Activated T-helper 2 cell treated with anti-CD3 and anti-CD28 coated beads, Interferon-gamma antibody, Interleukin-2, Interleukin-4, amounts not matched to agents 10 μg/mL and 5 μg/mL and 100 μg/mL, durations not matched to agents 14 hours and 24 hours and 36 hours (primary cell): ENCODE measurements at regions of chr14 and their contacts with region 1.

Region 1: DNA sequence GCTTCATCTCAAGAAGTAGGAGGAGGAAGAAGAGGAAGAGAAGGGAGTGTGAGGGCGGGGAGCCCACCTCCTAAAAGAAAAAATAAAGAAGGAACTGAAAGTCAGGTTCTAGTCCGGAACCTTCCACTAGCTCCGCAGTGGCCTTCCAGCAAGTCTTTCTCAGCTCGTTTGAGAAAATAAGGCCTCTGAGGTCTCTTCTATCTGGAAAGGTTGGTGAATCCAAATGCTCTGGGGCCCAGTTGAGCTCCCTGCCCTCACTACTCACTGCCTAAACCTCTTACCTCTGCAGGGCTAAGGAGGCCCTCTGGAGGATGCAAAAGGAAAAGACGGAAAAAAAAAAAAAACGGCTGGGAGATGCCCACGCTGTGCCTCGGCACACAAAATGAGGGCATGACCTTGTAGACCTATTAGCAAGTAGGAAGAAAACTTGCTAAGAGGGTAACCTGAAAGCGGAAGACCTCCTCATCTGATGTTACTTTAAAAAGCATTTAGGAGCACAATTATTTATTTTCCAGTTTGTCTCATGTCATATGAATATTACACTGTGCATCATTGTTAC is 35.9 kb downstream of the FBLN5 start:
- DNase-seq: peak; percentile 31
- H3K4me3 Mint-ChIP-seq: no peak overlapping the region
- H3K27ac Mint-ChIP-seq: peak overlapping the region; percentile 21
- H3K4me1 Mint-ChIP-seq: peaks cover 15% of the 10 kb centered on the region
- H3K27me3 Mint-ChIP-seq: peaks cover 2% of the 10 kb centered on the region

Region 2: GRCh38 chr14:91649930-91650329 is 261.6 kb before region 1 on chr14:
- intact Hi-C with region 1: loop called (anchors 5 kb)
- DNase-seq: no peak
- H3K4me3 Mint-ChIP-seq: no peak overlapping the region
- H3K27ac Mint-ChIP-seq: no peak overlapping the region
- H3K4me1 Mint-ChIP-seq: no peaks in the 10 kb centered on the region
- H3K27me3 Mint-ChIP-seq: no peaks in the 10 kb centered on the region

Region 3: GRCh38 chr14:92074555-92074954 is 163.0 kb after region 1 on chr14:
- intact Hi-C with region 1: no loop called
- DNase-seq: no peak
- H3K4me3 Mint-ChIP-seq: no peak overlapping the region
- H3K27ac Mint-ChIP-seq: no peak overlapping the region
- H3K4me1 Mint-ChIP-seq: no peaks in the 10 kb centered on the region
- H3K27me3 Mint-ChIP-seq: no peaks in the 10 kb centered on the region